Heart right ventricle (tissue), 16 donors: ENCODE measurements at regions of chr11 and their contacts with region 1.

Region 1: DNA sequence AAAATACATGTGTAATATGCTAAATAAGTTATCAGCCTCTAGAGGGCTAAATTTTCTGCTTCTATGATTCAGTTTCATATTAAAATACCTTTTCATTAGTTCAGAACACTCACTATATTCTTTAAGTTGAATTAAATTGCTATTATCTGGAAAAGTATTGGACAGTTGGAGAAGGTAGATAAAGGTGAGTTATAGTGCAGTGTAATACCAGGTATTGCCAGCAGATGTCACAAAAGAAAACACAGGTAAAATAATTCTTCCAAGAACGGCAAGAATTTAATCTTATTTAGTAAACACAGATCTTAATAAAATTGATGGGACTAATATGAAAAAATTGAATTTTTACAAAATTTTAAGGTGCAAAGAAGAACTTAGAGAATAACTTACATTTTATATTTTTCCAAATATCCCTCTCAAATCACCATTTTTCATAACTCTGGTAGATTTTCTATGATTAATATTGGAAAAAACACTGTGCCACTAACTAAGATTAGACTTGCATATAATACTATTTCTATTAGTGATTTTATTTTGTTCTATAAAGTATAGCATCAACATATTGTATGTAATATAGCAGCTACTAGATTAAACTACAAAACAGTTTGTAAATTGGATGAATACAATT is 1.7 kb upstream of the LRRC4C start:
- DNase-seq: no peak
- ATAC-seq: no peak
- H3K4me3 ChIP-seq: no peak overlapping the region
- H3K27ac ChIP-seq: no peak overlapping the region
- H3K4me1 ChIP-seq: no peaks in the 10 kb centered on the region
- H3K27me3 ChIP-seq: peaks cover 0 to 50% (median 25%) of the 10 kb centered on the region in 7 donors
- CTCF ChIP-seq: peak; percentile 22 to 68 (median 61)

Region 2: GRCh38 chr11:42524534-42525227 is 1063.5 kb after region 1 on chr11:
- intact Hi-C with region 1: loop called in 8 of 10 experiments (anchors 2 to 10 kb)
- DNase-seq: peak in 1 of 2 donors; percentile 29
- ATAC-seq: peak in 6 of 8 donors; percentile 48 to 72 (median 54)
- H3K4me3 ChIP-seq: no peak overlapping the region
- H3K27ac ChIP-seq: no peak overlapping the region
- H3K4me1 ChIP-seq: peaks cover 0 to 4% (median 0%) of the 10 kb centered on the region in 9 donors
- H3K27me3 ChIP-seq: peaks cover 0 to 22% (median 0%) of the 10 kb centered on the region in 7 donors
- CTCF ChIP-seq: peak; percentile 23 to 76 (median 69)